CD4-positive, alpha-beta T cell (primary cell): ENCODE measurements at regions of chrX and their contacts with region 1.

Region 1: GRCh38 chrX:71652405-71652804 is 14.9 kb upstream of the LOC101059915 start:
- DNase-seq: peak in 13 of 14 experiments; percentile 20 to 76 (median 39)
- ATAC-seq: peak; percentile 71
- H3K4me3 ChIP-seq: no peak overlapping the region
- H3K4me3 Mint-ChIP-seq: no peak overlapping the region
- H3K27ac ChIP-seq: no peak overlapping the region
- H3K27ac Mint-ChIP-seq: no peak overlapping the region
- H3K4me1 ChIP-seq: peaks cover 6% of the 10 kb centered on the region
- H3K4me1 Mint-ChIP-seq: peaks cover 9% of the 10 kb centered on the region
- H3K27me3 ChIP-seq: no peaks in the 10 kb centered on the region
- H3K27me3 Mint-ChIP-seq: no peaks in the 10 kb centered on the region
- CTCF ChIP-seq: peak; percentile 64

Region 2: GRCh38 chrX:71432733-71433132 is 219.7 kb before region 1 on chrX:
- CTCF ChIA-PET with region 1: no interaction called
- POLR2A ChIA-PET with region 1: no interaction called
- intact Hi-C with region 1: loop called in 1 of 2 experiments (anchors 5 kb)
- DNase-seq: no peak
- ATAC-seq: no peak
- H3K4me3 ChIP-seq: no peak overlapping the region
- H3K4me3 Mint-ChIP-seq: no peak overlapping the region
- H3K27ac ChIP-seq: no peak overlapping the region
- H3K27ac Mint-ChIP-seq: no peak overlapping the region
- H3K4me1 ChIP-seq: no peaks in the 10 kb centered on the region
- H3K4me1 Mint-ChIP-seq: no peaks in the 10 kb centered on the region
- H3K27me3 ChIP-seq: no peaks in the 10 kb centered on the region
- H3K27me3 Mint-ChIP-seq: no peaks in the 10 kb centered on the region
- CTCF ChIP-seq: no peak

Region 3: GRCh38 chrX:71586929-71587328 is 65.5 kb before region 1 on chrX:
- CTCF ChIA-PET with region 1: no interaction called
- POLR2A ChIA-PET with region 1: interaction called, 3 read pairs
- intact Hi-C with region 1: loop called in 1 of 2 experiments (anchors 5 kb)
- DNase-seq: no peak
- ATAC-seq: no peak
- H3K4me3 ChIP-seq: no peak overlapping the region
- H3K4me3 Mint-ChIP-seq: no peak overlapping the region
- H3K27ac ChIP-seq: no peak overlapping the region
- H3K27ac Mint-ChIP-seq: peak overlapping the region; percentile 60
- H3K4me1 ChIP-seq: no peaks in the 10 kb centered on the region
- H3K4me1 Mint-ChIP-seq: no peaks in the 10 kb centered on the region
- H3K27me3 ChIP-seq: no peaks in the 10 kb centered on the region
- H3K27me3 Mint-ChIP-seq: no peaks in the 10 kb centered on the region
- CTCF ChIP-seq: no peak

Region 4: DNA sequence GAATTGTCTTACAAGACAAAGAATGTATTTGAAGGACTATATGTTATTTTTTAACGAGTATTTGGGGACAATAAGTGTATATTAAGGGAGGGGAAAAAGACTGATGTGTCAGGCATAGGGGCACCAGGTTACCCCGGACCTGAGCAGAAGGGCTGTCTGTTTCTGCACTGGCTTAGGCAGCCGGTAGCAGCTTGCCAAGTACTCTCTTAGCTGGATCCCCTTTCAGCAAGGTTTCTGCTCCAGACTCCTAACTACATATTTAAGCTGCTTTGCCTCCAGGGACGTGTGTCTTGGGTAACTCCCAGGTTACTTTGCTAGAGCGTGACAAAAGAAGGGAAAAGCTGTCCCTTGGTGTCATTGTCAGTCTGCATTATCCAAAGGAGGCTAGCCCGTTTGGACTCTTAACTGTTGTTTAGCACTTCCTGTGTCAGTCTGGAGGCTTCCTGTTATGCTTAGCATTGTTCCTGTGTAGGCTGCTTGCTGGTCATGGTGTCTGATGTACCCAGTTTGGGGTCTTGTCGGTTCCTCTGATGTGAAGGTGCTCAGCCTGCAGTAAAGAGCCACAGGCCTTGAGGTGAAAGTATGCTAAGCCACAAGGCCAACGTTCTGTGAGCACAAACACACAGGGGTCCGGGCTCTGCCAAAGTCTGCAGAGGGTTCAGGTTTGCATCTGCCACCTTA is 45.7 kb before region 1 on chrX:
- CTCF ChIA-PET with region 1: no interaction called
- POLR2A ChIA-PET with region 1: no interaction called
- intact Hi-C with region 1: loop called (anchors 1 to 5 kb)
- DNase-seq: peak in 5 of 14 experiments; percentile 11 to 61 (median 45)
- ATAC-seq: peak; percentile 74
- H3K4me3 ChIP-seq: no peak overlapping the region
- H3K4me3 Mint-ChIP-seq: peak overlapping the region; percentile 58
- H3K27ac ChIP-seq: peak overlapping the region in 1 of 2 donors; percentile 26
- H3K27ac Mint-ChIP-seq: peak overlapping the region; percentile 93
- H3K4me1 ChIP-seq: peaks cover 45% of the 10 kb centered on the region
- H3K4me1 Mint-ChIP-seq: peaks cover 45% of the 10 kb centered on the region
- H3K27me3 ChIP-seq: no peaks in the 10 kb centered on the region
- H3K27me3 Mint-ChIP-seq: no peaks in the 10 kb centered on the region
- CTCF ChIP-seq: no peak